ENCODE measurements at regions of chr11 and their contacts with region 1.

Region 1: DNA sequence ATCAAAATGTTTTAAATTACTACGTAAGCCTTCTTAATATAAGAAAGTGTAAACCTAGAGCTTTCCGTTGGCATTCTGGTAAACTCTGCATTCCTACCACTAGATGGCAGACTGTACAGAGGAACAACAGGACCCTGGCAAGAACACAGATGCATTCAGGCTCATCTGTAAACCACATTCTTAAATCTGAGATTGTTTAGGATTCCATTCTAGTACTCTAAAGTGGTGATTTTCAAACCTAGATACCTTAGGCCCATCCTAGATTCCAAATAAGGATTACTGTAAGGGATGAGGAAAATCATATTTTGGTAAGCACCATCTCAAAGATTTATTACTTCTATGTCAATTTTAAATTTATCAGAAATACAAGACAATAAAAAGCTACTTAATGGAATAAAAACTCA is 26.9 kb downstream of the PICALM start:
- DNase-seq: peak in 1 of 2 donors; percentile 89
- ATAC-seq: peak; percentile 69 to 94 (median 86)
- H3K4me3 ChIP-seq: peak overlapping the region in 7 of 10 donors; percentile 2 to 42 (median 30)
- H3K27ac ChIP-seq: peak overlapping the region in 8 of 10 donors; percentile 2 to 79 (median 61)
- H3K4me1 ChIP-seq: peaks cover 0 to 95% (median 75%) of the 10 kb centered on the region in 9 donors
- H3K27me3 ChIP-seq: no peaks in the 10 kb centered on the region
- CTCF ChIP-seq: peak; percentile 75 to 94 (median 90)

Region 2: GRCh38 chr11:86062719-86063118 is 20.7 kb after region 1 on chr11:
- intact Hi-C with region 1: loop called in 4 of 10 experiments (anchors 2 kb)
- DNase-seq: no peak
- ATAC-seq: peak in 7 of 8 donors; percentile 23 to 80 (median 35)
- H3K4me3 ChIP-seq: peak overlapping the region in 6 of 10 donors; percentile 1 to 78 (median 11)
- H3K27ac ChIP-seq: peak overlapping the region in 9 of 10 donors; percentile 16 to 99 (median 47)
- H3K4me1 ChIP-seq: peaks cover 0 to 87% (median 86%) of the 10 kb centered on the region in 9 donors
- H3K27me3 ChIP-seq: no peaks in the 10 kb centered on the region
- CTCF ChIP-seq: no peak

Region 3: GRCh38 chr11:86068951-86069407 is 27.0 kb after region 1 on chr11 and contains the start of gene PICALM:
- intact Hi-C with region 1: loop called in 4 of 10 experiments (anchors 2 kb)
- DNase-seq: peak; percentile 98 to 99
- ATAC-seq: peak; percentile 92 to 98 (median 96)
- H3K4me3 ChIP-seq: peak within 1 kb of the TSS; percentile 77 to 99 (median 92)
- H3K27ac ChIP-seq: peak within 1 kb of the TSS; percentile 96 to 99 (median 98)
- H3K4me1 ChIP-seq: peaks cover 2 to 44% (median 34%) of the 10 kb centered on the region in 9 donors
- H3K27me3 ChIP-seq: no peaks in the 10 kb centered on the region
- CTCF ChIP-seq: peak in 1 of 9 donors; percentile 18
- total RNA-seq, gene PICALM: 124 to 206 (median 170) TPM

Region 4: DNA sequence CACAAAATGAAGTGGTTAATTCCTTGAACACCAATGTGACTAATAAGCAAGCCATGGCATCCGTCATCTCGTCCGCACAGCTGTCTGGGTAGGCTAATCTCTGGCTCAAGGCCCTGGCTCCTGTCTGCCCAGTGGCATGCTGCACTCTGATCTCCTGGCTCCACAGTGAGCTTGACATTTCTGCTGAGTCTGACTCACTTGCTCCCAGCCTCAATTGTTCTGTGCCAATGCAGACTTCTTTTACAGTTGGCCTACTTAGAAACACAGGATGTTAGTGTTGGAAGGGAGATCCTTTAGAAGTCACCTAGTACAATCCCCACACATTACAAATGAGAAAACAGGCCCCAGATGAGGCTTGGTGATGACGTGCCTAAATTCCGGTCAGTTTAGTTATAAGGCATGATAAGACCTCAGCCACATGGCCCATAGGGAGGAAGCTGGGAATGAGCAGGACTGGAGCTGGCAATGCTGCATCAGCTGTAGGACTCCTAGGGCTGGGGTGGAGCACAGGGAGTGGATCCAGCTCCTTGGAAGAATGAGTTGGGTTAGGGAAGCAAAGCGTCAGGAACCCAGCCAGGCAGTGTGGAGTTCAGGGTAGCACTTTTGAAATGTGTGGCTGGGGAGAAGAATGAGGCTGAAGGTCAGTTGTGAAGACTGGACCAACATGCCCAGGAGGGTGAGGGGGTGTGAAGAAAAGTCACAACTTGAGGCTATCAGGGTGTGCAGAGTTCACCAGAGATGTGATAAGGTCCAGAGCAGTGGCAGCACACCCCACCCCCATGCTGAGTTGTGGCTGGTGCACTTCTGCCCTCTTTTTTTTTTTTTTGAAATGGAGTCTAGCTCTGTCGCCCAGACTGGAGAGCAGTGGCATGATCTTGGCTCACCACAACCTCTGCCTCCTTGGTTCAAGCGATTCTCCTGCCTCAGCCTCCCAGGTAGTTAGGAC is 132.4 kb after region 1 on chr11:
- intact Hi-C with region 1: loop called in 1 of 10 experiments (anchors 5 kb)
- DNase-seq: peak; percentile 69 to 91
- ATAC-seq: peak; percentile 88 to 99 (median 94)
- H3K4me3 ChIP-seq: no peak overlapping the region
- H3K27ac ChIP-seq: peak overlapping the region; percentile 37 to 92 (median 80)
- H3K4me1 ChIP-seq: peaks cover 8 to 75% (median 54%) of the 10 kb centered on the region in 9 donors
- H3K27me3 ChIP-seq: no peaks in the 10 kb centered on the region
- CTCF ChIP-seq: peak in 1 of 9 donors; percentile 8